ENCODE measurements at regions of chr4 and their contacts with region 1.

Region 1: DNA sequence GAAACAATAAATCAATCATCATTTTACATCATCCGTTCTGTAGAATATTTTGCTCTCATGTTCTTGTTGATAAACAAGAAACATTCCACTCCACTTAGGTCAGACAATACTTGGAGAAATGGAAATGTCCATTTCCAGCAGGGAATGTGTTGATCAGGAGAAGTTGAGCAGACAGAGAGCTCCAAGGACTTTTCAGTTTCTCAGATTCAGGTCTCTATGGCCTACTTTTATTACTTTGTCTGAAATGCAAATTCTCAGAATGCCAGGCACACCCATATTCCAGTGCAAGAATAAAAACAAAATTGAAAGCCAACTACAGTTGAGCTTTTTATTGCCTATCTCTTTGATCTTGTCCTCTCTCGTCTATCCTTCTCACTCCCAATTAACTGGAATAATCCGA is 72.3 kb downstream of the HPGD start:
- DNase-seq: no peak
- H3K4me3 Mint-ChIP-seq: no peak overlapping the region
- H3K27ac Mint-ChIP-seq: no peak overlapping the region
- H3K4me1 Mint-ChIP-seq: no peaks in the 10 kb centered on the region
- H3K27me3 Mint-ChIP-seq: no peaks in the 10 kb centered on the region

Region 2: DNA sequence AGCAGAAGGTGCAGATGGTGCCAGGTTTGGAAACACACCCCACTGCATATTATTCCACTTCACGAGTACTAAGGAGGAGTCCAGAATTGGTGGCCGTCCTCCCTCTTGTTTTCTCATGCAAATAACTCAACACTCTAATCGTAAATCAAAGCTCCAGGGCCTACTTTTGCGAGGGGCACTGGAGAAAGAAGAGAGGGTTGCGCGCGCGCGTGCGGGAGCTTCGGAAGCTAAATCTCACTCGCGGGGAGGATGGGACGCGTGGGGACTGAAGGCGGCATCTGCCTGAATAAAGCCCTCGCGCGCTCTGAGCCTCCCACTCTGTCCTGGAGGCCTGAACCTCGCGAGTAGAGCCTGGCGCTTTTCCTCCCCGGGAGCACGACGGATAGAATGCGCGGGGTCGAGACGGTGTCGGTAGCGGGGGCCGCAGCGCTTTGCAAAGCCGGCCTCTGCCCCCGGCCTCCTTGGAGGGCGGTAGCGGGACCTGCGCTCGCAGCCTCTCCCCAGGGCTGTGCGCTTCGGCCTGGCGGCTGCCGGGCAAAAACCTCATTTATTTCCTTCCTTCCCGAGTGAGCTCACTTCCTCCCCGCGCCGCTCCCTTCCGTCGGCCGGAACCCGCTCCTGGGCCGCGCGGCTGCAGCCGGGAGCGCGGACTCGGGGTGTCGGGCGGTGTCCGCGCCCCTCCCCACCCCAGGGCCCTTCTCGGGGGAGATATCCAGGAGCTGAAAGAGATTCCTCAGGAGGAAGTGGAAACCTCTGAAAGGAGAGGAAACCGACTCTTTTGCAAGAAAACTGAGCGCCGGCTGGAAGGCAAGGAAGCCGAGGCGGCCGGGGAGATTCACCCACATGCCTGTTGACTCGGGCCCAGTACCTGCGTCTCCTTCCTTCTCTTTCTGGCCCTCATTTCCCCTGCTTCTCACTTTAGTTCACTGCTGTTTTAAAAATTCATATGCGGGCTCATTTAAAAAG is 940.6 kb before region 1 on chr4:
- CTCF ChIA-PET with region 1: no interaction called
- POLR2A ChIA-PET with region 1: no interaction called
- intact Hi-C with region 1: no loop called
- DNase-seq: no peak
- H3K4me3 Mint-ChIP-seq: peak overlapping the region; percentile 69
- H3K27ac Mint-ChIP-seq: no peak overlapping the region
- H3K4me1 Mint-ChIP-seq: peaks cover 24% of the 10 kb centered on the region
- H3K27me3 Mint-ChIP-seq: peaks cover 73% of the 10 kb centered on the region

Region 3: DNA sequence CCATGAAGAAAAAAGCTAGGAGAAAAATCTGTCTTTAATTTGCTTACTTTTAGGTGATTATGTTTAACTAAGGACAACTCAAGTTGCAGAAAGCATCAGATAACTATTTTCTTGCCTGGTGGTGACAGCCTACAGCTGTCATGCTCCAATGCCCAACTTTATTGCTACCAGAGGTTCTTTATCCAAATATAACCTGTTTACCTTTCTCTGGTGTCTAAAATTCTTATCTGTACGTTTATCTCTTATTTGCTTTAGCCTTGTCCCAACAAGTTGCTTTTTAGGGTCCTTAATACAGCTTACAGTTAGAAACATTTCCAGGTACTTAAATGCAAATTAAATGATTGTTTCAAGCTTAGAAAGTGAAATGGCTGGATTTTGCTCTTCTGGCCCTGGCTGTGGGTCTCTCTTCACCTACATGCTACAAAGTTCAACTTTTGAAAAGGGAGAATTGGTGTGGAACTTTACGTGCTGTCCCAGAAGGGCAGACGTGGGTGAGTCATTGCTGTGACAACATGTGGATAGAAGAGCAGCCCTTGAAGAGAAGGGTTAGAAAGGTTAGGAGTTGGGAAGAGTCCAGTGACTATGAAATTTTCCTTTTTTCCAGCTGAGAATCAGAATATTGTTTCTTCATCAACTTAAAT is 11.6 kb after region 1 on chr4:
- CTCF ChIA-PET with region 1: no interaction called
- POLR2A ChIA-PET with region 1: no interaction called
- intact Hi-C with region 1: no loop called
- DNase-seq: no peak
- H3K4me3 Mint-ChIP-seq: no peak overlapping the region
- H3K27ac Mint-ChIP-seq: no peak overlapping the region
- H3K4me1 Mint-ChIP-seq: no peaks in the 10 kb centered on the region
- H3K27me3 Mint-ChIP-seq: peaks cover 2% of the 10 kb centered on the region

Region 4: DNA sequence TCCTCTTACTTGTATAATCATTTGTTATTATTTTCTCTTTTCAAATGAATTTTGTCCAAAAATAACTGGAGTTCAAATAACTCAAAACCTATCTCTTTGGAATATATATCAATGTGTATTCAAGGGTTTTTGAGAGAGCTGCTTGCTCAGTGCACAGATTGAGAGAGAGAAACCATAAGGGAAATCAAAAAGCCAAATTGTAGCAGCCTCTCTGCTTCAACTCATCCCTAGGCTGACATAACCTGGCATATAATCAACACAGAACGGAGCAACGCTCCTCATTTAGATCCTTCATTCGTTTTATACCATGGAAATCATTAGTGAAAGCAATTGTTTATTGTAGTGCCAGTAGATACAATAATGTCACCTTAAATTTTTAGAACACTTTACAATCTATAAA is 1363.9 kb after region 1 on chr4:
- CTCF ChIA-PET with region 1: no interaction called
- POLR2A ChIA-PET with region 1: no interaction called
- intact Hi-C with region 1: loop called (anchors 10 kb)
- DNase-seq: no peak
- H3K4me3 Mint-ChIP-seq: no peak overlapping the region
- H3K27ac Mint-ChIP-seq: no peak overlapping the region
- H3K4me1 Mint-ChIP-seq: no peaks in the 10 kb centered on the region
- H3K27me3 Mint-ChIP-seq: no peaks in the 10 kb centered on the region